A549 (cell line): ENCODE measurements at regions of chr10 and their contacts with region 1.

Region 1: DNA sequence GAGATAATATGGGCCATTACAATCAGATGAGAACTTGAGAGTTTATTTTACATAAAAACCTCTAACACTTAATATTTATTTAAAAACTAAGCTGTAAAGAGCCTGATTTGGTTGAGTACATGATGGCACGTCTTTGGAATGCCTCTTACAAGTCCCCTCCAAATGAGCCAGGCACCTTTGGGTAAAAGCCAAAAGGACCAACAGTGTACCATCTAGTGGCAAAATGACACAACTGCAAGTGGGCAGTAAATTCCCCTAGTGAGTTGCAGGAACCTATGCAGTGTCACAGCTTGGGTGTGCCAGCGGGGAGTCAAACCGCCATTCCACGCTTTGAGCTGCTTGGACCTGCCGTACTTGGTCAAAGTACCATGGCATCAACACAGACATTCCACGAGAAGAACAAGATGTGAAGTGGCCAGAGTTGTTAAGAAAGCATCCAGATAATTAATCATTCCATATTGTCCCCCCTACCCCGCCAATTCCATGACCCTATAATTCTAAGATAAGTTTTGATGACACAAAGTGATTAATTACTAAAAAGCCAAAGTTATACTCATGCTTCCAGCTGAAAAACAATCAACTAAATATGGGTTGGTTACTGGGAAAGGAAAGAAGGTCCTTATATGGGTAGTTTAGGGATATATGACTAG is 115.2 kb downstream of the SORBS1 start:
- DNase-seq: peak; percentile 81 to 92
- ATAC-seq: peak; percentile 84 to 91
- H3K4me3 ChIP-seq: no peak overlapping the region
- H3K27ac ChIP-seq: peak overlapping the region; percentile 42 to 43; a peak in 4 of 6 replicates
- H3K4me1 ChIP-seq: peaks cover 17% of the 10 kb centered on the region
- CTCF ChIP-seq: peak; percentile 75
- EP300 ChIP-seq: no peak
- POLR2A ChIP-seq: no peak
- RAD21 ChIP-seq: peak; percentile 49 to 52; a peak in 4 of 5 replicates

Region 2: GRCh38 chr10:95295031-95295755 is 150.8 kb before region 1 on chr10:
- CTCF ChIA-PET with region 1: no interaction called
- POLR2A ChIA-PET with region 1: no interaction called
- DNase-seq: no peak
- ATAC-seq: no peak
- H3K4me3 ChIP-seq: no peak overlapping the region
- H3K27ac ChIP-seq: peak overlapping the region; percentile 21 to 22; a peak in 3 of 6 replicates
- H3K4me1 ChIP-seq: no peaks in the 10 kb centered on the region
- CTCF ChIP-seq: no peak
- EP300 ChIP-seq: no peak
- POLR2A ChIP-seq: no peak
- RAD21 ChIP-seq: no peak

Region 3: DNA sequence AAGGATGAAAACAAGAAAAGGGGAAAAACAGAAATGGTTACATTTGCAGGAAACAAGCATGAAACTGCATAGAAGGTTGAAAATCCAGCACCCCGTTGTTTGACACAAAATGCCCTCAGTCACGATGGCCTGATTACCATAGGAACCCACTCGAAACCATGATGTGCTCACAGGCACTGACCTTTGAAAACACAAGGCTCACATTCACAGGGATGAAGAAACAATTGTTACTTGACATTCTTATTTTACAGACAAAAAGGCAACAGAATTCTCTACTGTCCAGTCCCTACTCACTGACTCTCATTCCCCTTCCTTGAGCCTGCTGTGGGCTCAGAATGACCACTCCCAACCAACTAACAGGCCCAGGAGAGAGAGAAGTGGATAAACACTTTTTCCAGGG is 23.7 kb before region 1 on chr10:
- CTCF ChIA-PET with region 1: interaction called, 22 read pairs
- POLR2A ChIA-PET with region 1: no interaction called
- DNase-seq: no peak
- ATAC-seq: no peak
- H3K4me3 ChIP-seq: no peak overlapping the region
- H3K27ac ChIP-seq: no peak overlapping the region
- H3K4me1 ChIP-seq: no peaks in the 10 kb centered on the region
- CTCF ChIP-seq: no peak
- EP300 ChIP-seq: no peak
- POLR2A ChIP-seq: no peak
- RAD21 ChIP-seq: no peak

Region 4: GRCh38 chr10:95513941-95514392 is 68.0 kb after region 1 on chr10:
- CTCF ChIA-PET with region 1: no interaction called
- POLR2A ChIA-PET with region 1: no interaction called
- DNase-seq: peak; percentile 37 to 39
- ATAC-seq: peak; percentile 73 to 82; a peak in 5 of 6 replicates
- H3K4me3 ChIP-seq: no peak overlapping the region
- H3K27ac ChIP-seq: no peak overlapping the region
- H3K4me1 ChIP-seq: no peaks in the 10 kb centered on the region
- CTCF ChIP-seq: no peak
- EP300 ChIP-seq: no peak
- POLR2A ChIP-seq: no peak
- RAD21 ChIP-seq: no peak